ENCODE measurements at regions of chr4 and their contacts with region 1.

Region 1: GRCh38 chr4:26197018-26197779 is 123.6 kb upstream of the RBPJ start:
- DNase-seq: peak; percentile 86
- H3K4me3 Mint-ChIP-seq: peak overlapping the region; percentile 0
- H3K27ac Mint-ChIP-seq: peak overlapping the region; percentile 88
- H3K4me1 Mint-ChIP-seq: peaks cover 72% of the 10 kb centered on the region
- H3K27me3 Mint-ChIP-seq: peaks cover 1% of the 10 kb centered on the region

Region 2: DNA sequence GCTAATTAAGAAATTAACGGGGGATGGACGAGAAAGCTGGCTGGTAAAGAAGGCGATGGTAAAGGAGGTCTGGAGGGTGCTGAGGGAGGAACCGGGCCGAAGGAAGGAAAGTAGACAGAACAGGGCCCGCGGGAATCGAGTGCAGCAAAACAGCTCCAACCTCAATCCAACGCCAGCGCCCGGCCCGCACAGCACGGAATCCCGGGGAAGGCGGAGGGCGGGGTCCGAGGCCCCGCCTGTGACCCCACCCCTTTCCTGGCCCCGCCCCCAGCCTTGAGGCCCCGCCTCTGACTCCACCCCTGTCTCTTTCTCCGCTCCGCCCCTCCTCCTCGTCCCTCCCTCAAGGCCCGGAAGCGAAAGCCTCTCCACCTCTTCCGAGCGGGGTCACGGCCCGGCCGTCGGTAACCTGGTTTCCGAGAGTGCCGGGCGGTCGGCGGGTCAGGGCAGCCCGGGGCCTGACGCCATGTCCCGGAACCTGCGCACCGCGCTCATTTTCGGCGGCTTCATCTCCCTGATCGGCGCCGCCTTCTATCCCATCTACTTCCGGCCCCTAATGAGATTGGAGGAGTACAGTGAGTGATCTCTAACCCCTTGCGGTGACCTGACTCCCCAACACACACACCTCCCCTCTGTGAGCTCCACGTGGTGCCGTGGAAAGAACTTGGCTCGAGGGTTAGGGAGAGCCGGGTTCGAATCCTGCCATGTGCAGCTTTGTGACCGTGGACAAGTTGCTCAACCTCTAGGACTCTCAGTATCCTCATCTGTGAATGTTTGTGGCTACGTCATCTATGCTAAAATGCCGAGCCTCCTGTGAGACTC is 283.1 kb before region 1 on chr4 and contains the start of gene SMIM20:
- CTCF ChIA-PET with region 1: no interaction called
- intact Hi-C with region 1: loop called (anchors 5 kb)
- DNase-seq: peak; percentile 89
- H3K4me3 Mint-ChIP-seq: peak within 1 kb of the TSS; percentile 96
- H3K27ac Mint-ChIP-seq: peak within 1 kb of the TSS; percentile 97
- H3K4me1 Mint-ChIP-seq: peaks cover 17% of the 10 kb centered on the region
- H3K27me3 Mint-ChIP-seq: no peaks in the 10 kb centered on the region
- total RNA-seq, gene SMIM20: 28.1 to 33.2 TPM

Region 3: DNA sequence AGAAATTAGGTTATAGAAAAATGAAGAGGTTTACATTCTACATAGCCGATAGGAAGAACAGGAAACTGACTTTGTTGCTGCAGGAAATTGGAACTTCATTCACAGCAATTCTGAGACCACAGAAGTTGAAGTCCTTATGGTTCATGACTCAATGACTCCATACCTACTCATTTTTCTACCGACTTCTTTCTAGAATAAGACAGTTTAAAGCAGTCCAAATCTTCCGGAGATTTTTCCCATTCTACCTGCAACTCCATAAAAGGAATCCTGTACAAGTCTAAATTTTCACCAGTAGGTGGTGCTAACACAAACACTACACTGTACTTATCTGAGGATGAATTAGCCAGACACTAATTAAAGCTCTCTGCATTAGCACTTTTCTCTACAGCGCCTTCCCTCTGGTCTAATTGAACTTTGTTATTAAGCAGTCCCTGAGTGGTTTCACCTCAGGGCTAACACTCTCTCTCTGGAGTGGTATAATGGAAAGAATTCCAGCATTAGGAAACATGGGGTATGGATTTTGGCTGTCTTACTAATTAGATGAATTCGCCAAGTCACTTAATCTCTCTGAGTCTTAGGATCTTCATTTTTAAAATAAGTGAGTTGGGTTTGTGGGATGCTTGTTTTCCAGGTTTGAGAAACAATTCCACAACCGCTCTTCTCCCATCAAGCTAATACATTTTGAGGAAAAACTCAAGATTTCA is 115.3 kb before region 1 on chr4:
- CTCF ChIA-PET with region 1: interaction called, 12 read pairs
- intact Hi-C with region 1: loop called (anchors 1 kb)
- DNase-seq: peak; percentile 23
- H3K4me3 Mint-ChIP-seq: no peak overlapping the region
- H3K27ac Mint-ChIP-seq: peak overlapping the region; percentile 79
- H3K4me1 Mint-ChIP-seq: peaks cover 74% of the 10 kb centered on the region
- H3K27me3 Mint-ChIP-seq: peaks cover 5% of the 10 kb centered on the region

Region 4: DNA sequence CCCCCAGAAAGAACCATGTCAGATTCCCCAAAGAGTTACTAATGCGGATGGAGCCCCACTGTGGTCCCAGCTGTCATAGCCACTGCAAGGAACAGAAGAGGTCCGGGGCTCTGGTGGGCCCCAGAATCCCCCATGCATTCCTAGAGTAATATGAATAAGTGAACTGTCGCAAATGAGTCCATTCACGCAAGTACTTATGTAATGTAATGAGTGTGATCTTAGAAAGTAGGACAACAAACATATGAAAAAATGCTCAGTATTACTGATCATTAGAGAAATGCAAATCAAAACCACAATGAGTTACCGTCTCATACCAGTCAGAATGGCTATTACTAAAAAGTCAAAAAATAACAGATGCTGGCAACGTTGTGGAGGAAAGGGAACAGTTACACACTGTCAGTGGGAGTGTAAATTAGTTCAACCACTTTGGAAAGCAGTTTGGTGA is 17.9 kb before region 1 on chr4:
- CTCF ChIA-PET with region 1: no interaction called
- intact Hi-C with region 1: loop called (anchors 1 kb)
- DNase-seq: peak; percentile 33
- H3K4me3 Mint-ChIP-seq: no peak overlapping the region
- H3K27ac Mint-ChIP-seq: peak overlapping the region; percentile 60
- H3K4me1 Mint-ChIP-seq: peaks cover 16% of the 10 kb centered on the region
- H3K27me3 Mint-ChIP-seq: no peaks in the 10 kb centered on the region

Region 5: GRCh38 chr4:26509681-26510333 is 312.6 kb after region 1 on chr4:
- CTCF ChIA-PET with region 1: no interaction called
- intact Hi-C with region 1: no loop called
- DNase-seq: no peak
- H3K4me3 Mint-ChIP-seq: no peak overlapping the region
- H3K27ac Mint-ChIP-seq: no peak overlapping the region
- H3K4me1 Mint-ChIP-seq: no peaks in the 10 kb centered on the region
- H3K27me3 Mint-ChIP-seq: no peaks in the 10 kb centered on the region

Region 6: GRCh38 chr4:26873391-26874026 is 676.3 kb after region 1 on chr4:
- CTCF ChIA-PET with region 1: no interaction called
- intact Hi-C with region 1: loop called (anchors 1 kb)
- DNase-seq: peak; percentile 89
- H3K4me3 Mint-ChIP-seq: no peak overlapping the region
- H3K27ac Mint-ChIP-seq: peak overlapping the region; percentile 69
- H3K4me1 Mint-ChIP-seq: peaks cover 80% of the 10 kb centered on the region
- H3K27me3 Mint-ChIP-seq: no peaks in the 10 kb centered on the region

Measured in activated naive CD4-positive, alpha-beta T cell treated with anti-CD3 and anti-CD28 coated beads for 36 hours (primary cell).